ENCODE measurements at regions of chr1 and their contacts with region 1.

Region 1: DNA sequence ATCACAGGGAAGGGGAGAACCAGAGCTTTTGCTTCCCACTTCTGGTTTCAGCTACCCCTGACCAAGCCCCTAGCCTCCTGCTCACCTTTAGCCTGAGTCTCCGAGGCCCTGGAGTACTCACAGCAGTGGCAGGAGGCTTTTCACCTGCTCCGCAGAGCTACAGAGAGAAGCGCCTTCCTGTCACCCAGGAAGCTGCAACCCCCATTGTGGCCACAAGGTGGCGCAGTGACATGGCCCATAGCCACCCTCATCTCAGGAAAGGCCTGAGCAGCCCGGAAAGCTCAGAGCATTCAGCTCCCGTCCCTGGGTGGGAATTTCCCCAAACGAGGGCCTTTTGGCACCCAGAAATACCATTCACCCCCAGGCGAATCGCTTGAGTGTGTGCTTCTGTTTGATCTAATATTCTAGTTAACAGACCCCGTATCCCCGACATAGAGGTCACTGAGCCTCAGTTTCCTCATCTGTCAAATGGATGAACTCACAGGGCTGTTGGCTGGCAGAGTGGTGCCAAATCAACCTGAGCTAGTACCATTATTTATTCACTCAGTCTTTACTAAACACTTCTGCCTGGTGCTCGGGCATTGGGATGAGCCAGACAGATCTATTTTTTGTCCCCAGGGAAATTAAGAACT is 25.3 kb downstream of the A3GALT2 start:
- DNase-seq: no peak
- H3K4me3 ChIP-seq: no peak overlapping the region
- H3K27ac ChIP-seq: peak overlapping the region; percentile 31 to 72 (median 64)
- H3K4me1 ChIP-seq: peaks cover 0 to 56% (median 18%) of the 10 kb centered on the region in 3 donors
- H3K27me3 ChIP-seq: no peaks in the 10 kb centered on the region
- CTCF ChIP-seq: peak; percentile 86 to 100 (median 98)
- POLR2A ChIP-seq: no peak

Region 2: DNA sequence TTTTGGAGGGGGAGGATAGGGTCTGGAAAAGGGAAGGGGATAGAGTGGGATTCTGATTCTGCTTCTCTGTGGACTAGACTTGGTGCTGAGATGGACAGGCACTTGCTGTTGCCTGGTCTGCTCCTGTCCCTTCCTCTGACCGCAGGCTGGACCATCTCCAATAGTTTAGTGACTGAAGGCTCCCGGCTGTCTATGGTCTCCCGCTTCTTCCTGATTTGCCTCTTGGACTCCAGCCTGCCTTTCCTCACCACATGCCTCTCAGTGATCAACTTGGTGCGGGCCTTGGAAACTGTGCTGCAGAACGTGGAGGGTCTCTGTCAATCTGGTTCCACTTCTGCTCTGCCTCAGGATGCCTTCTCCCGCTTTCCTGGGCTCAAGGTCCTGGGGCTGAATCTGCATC is 170.6 kb after region 1 on chr1:
- intact Hi-C with region 1: loop called (anchors 5 kb)
- DNase-seq: no peak
- H3K4me3 ChIP-seq: no peak overlapping the region
- H3K27ac ChIP-seq: peak overlapping the region in 1 of 4 donors; percentile 16
- H3K4me1 ChIP-seq: peaks cover 0 to 44% (median 2%) of the 10 kb centered on the region in 3 donors
- H3K27me3 ChIP-seq: no peaks in the 10 kb centered on the region
- CTCF ChIP-seq: no peak
- POLR2A ChIP-seq: no peak